ENCODE measurements at regions of chr17 and their contacts with region 1.

Region 1: GRCh38 chr17:1365445-1366039 is 34.5 kb downstream of the YWHAE start:
- DNase-seq: peak; percentile 85
- ATAC-seq: peak; percentile 69
- H3K4me3 ChIP-seq: no peak overlapping the region
- H3K4me3 Mint-ChIP-seq: peak overlapping the region; percentile 39
- H3K27ac ChIP-seq: peak overlapping the region; percentile 42 to 62
- H3K27ac Mint-ChIP-seq: peak overlapping the region; percentile 59
- H3K4me1 ChIP-seq: peaks cover 36 to 51% of the 10 kb centered on the region in 2 donors
- H3K4me1 Mint-ChIP-seq: peaks cover 56% of the 10 kb centered on the region
- H3K27me3 ChIP-seq: no peaks in the 10 kb centered on the region
- H3K27me3 Mint-ChIP-seq: no peaks in the 10 kb centered on the region
- CTCF ChIP-seq: peak; percentile 89

Region 2: DNA sequence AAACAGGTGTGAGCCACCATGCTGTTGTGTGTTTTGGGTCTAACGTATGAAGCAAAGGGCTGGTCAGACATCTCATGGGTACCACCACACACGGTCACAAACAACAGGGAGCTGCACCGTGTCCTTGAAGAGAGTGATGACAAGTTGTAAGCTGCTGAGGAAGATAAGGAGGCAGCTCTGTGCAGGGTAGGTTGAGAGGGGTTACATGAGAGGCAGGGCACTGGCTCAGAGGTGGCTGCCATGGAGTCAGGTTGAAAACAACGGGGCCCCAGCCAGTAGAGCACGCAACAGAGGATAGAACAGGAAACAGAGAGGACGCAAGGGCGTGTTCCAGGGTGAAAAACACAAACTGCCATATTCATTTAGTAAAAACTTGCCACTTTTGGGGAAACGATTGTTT is 33.8 kb before region 1 on chr17:
- CTCF ChIA-PET with region 1: interaction called, 10 read pairs
- POLR2A ChIA-PET with region 1: no interaction called
- intact Hi-C with region 1: no loop called
- DNase-seq: no peak
- ATAC-seq: peak; percentile 24
- H3K4me3 ChIP-seq: no peak overlapping the region
- H3K4me3 Mint-ChIP-seq: peak overlapping the region; percentile 0
- H3K27ac ChIP-seq: no peak overlapping the region
- H3K27ac Mint-ChIP-seq: no peak overlapping the region
- H3K4me1 ChIP-seq: peaks cover 3 to 7% of the 10 kb centered on the region in 2 donors
- H3K4me1 Mint-ChIP-seq: peaks cover 11% of the 10 kb centered on the region
- H3K27me3 ChIP-seq: peaks cover 0 to 7% (median 1%) of the 10 kb centered on the region in 4 experiments
- H3K27me3 Mint-ChIP-seq: no peaks in the 10 kb centered on the region
- CTCF ChIP-seq: no peak

Region 3: GRCh38 chr17:1390433-1391367 is 25.2 kb after region 1 on chr17:
- CTCF ChIA-PET with region 1: interaction called, 11 read pairs
- POLR2A ChIA-PET with region 1: interaction called, 9 read pairs
- intact Hi-C with region 1: no loop called
- DNase-seq: no peak
- ATAC-seq: no peak
- H3K4me3 ChIP-seq: no peak overlapping the region
- H3K4me3 Mint-ChIP-seq: peak overlapping the region; percentile 52
- H3K27ac ChIP-seq: peak overlapping the region in 1 of 2 donors; percentile 62
- H3K27ac Mint-ChIP-seq: no peak overlapping the region
- H3K4me1 ChIP-seq: peaks cover 59 to 61% of the 10 kb centered on the region in 2 donors
- H3K4me1 Mint-ChIP-seq: peaks cover 69% of the 10 kb centered on the region
- H3K27me3 ChIP-seq: no peaks in the 10 kb centered on the region
- H3K27me3 Mint-ChIP-seq: no peaks in the 10 kb centered on the region
- CTCF ChIP-seq: no peak

Region 4: DNA sequence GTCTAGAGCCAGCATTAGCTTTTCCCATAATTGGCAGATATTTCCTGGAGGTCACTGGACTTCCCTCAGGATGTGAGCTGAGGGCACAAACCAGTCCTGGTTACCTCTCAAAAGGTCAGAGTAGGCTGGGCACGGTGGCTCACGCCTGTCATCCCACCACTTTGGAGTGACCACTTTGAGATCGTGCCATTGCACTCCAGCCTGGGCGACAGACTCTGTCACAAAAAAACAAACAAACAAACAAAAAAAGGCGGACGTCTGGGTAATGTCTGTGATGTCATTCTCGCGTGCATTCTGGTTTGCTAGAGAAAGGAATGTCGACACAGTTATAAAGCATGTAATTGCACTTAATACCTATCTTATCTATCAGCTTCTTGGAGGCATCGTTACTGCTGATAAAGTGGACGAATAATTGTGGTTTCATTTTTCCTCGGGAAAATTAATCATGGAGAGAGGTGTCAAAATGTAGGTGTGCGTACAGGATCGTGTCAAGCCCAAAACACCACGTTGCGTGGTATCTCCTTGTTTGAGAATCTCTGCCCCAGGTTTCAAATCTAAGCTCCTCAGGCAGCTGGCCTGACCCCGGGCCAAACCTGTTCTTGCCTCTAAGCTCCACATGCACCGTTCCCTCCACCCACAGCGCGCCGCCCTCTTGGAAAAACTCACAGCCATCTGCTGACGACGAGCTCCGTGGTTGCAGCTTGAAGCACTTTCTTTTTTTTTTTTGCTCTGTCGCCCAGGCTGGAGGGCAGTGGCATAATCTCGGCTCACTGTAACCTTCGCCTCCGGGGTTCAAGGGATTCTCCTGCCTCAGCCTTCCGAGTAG is 97.0 kb after region 1 on chr17:
- CTCF ChIA-PET with region 1: interaction called, 11 read pairs
- POLR2A ChIA-PET with region 1: interaction called, 3 read pairs
- intact Hi-C with region 1: no loop called
- DNase-seq: peak; percentile 24
- ATAC-seq: no peak
- H3K4me3 ChIP-seq: peak overlapping the region in 2 of 5 experiments; percentile 4 to 30
- H3K4me3 Mint-ChIP-seq: peak overlapping the region; percentile 76
- H3K27ac ChIP-seq: no peak overlapping the region
- H3K27ac Mint-ChIP-seq: peak overlapping the region; percentile 91
- H3K4me1 ChIP-seq: peaks cover 20 to 37% of the 10 kb centered on the region in 2 donors
- H3K4me1 Mint-ChIP-seq: peaks cover 29% of the 10 kb centered on the region
- H3K27me3 ChIP-seq: peaks cover 0 to 2% (median 0%) of the 10 kb centered on the region in 4 experiments
- H3K27me3 Mint-ChIP-seq: peaks cover 4% of the 10 kb centered on the region
- CTCF ChIP-seq: no peak

Region 5: DNA sequence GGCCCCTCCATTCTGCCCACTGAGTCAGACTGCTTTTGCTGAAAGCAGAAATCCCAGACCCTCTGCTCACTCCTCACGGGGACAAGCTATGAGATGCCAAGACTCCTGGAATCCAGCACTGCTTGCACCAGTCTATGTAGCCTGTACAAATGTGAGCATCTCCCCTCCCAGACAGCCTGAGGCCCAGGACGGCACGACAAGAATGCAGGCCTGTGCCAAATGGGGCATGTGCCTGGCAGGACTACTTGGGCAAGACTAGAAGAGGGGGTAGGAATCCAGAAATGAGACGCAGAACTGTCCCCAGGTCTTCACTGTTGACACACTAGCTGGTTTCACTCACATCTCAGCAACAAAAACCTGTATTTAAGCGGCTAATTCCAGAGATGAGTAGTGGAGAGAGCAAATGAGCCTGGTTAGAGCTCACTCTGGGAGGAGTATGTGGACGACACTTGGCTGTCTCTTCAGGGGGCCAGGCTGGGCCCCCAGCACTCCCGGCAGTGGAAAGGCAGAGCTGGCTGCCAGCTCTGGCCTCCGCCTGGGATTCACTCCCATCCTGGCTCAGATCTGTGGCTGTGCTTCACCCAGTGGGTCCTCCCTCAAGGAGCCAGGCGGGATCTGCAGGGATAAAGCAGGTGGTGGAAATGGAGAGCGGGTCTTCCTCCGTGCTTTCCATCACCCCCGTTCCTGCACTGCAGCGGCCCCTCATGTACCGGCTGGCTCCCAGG is 129.9 kb after region 1 on chr17:
- CTCF ChIA-PET with region 1: interaction called, 12 read pairs
- POLR2A ChIA-PET with region 1: no interaction called
- intact Hi-C with region 1: no loop called
- DNase-seq: no peak
- ATAC-seq: no peak
- H3K4me3 ChIP-seq: no peak overlapping the region
- H3K4me3 Mint-ChIP-seq: no peak overlapping the region
- H3K27ac ChIP-seq: no peak overlapping the region
- H3K27ac Mint-ChIP-seq: no peak overlapping the region
- H3K4me1 ChIP-seq: peaks cover 23 to 25% of the 10 kb centered on the region in 2 donors
- H3K4me1 Mint-ChIP-seq: peaks cover 25% of the 10 kb centered on the region
- H3K27me3 ChIP-seq: peaks cover 0 to 5% (median 0%) of the 10 kb centered on the region in 4 experiments
- H3K27me3 Mint-ChIP-seq: no peaks in the 10 kb centered on the region
- CTCF ChIP-seq: no peak

Region 6: DNA sequence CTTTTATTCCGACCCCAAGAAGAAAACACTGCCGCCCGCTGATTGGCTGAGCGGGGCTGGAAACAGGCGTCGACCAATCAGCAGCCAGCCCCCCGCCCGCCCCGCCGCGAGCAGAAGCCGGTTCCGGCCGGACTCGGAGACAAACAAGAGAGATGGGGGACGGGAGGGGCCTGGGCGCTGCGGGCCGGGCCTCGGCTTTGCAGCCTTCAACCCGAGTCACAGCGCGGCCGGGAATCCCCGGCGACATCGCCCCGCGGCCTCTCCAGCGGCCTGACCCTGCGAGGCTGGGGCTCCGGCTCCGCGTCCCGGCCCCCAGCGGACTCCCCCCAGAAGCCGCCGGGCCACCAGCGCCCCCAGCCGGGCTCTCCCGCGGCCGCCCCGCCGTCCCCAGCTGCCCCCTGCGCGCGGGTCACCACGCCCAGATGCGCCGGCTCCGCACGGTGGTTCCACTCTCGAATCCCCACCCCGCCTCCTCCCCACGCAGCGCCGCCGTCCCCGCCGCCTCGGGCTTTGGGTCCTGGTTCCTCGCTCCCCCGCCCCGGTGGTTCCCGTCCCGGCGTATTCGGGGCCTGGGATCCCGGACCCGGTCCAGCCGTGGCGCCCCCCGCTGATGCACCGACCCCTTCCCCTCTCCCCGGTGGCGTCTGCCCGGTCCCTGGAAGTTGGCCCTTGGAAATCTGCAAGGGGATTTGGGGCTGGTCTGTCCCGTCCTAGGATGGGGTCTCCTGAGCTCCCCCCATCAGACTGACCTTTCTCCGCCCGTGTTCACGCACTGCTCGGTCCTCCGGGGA is 263.5 kb after region 1 on chr17:
- CTCF ChIA-PET with region 1: interaction called, 31 read pairs
- POLR2A ChIA-PET with region 1: interaction called, 3 read pairs
- intact Hi-C with region 1: loop called (anchors 1 kb)
- DNase-seq: peak; percentile 96
- ATAC-seq: peak; percentile 64
- H3K4me3 ChIP-seq: peak overlapping the region; percentile 52 to 97 (median 92)
- H3K4me3 Mint-ChIP-seq: peak overlapping the region; percentile 93
- H3K27ac ChIP-seq: peak overlapping the region; percentile 94 to 97
- H3K27ac Mint-ChIP-seq: peak overlapping the region; percentile 98
- H3K4me1 ChIP-seq: peaks cover 49 to 57% of the 10 kb centered on the region in 2 donors
- H3K4me1 Mint-ChIP-seq: peaks cover 49% of the 10 kb centered on the region
- H3K27me3 ChIP-seq: no peaks in the 10 kb centered on the region
- H3K27me3 Mint-ChIP-seq: no peaks in the 10 kb centered on the region
- CTCF ChIP-seq: peak; percentile 36

Measured in B cell (primary cell).